ENCODE measurements at regions of chr5 and their contacts with region 1.

Region 1: GRCh38 chr5:54243473-54244080 is 66.8 kb downstream of the ARL15 start:
- H3K4me3 ChIP-seq: no peak overlapping the region
- H3K27ac ChIP-seq: no peak overlapping the region
- H3K4me1 ChIP-seq: no peaks in the 10 kb centered on the region
- CTCF ChIP-seq: peak; percentile 17; the same call in 1 of the 2 replicates

Region 2: GRCh38 chr5:53944981-53945380 is 298.6 kb before region 1 on chr5:
- CTCF ChIA-PET with region 1: no interaction called
- POLR2A ChIA-PET with region 1: no interaction called
- H3K4me3 ChIP-seq: no peak overlapping the region
- H3K27ac ChIP-seq: no peak overlapping the region
- H3K4me1 ChIP-seq: peaks cover 7% of the 10 kb centered on the region
- CTCF ChIP-seq: no peak

Region 3: GRCh38 chr5:54229041-54229780 is 14.4 kb before region 1 on chr5:
- CTCF ChIA-PET with region 1: interaction called, 12 read pairs
- POLR2A ChIA-PET with region 1: no interaction called
- H3K4me3 ChIP-seq: no peak overlapping the region
- H3K27ac ChIP-seq: no peak overlapping the region
- H3K4me1 ChIP-seq: no peaks in the 10 kb centered on the region; the same call in 1 of the 2 replicates
- CTCF ChIP-seq: no peak; the same call in 1 of the 2 replicates

Region 4: GRCh38 chr5:54254482-54255198 is 11.1 kb after region 1 on chr5:
- CTCF ChIA-PET with region 1: interaction called, 21 read pairs
- POLR2A ChIA-PET with region 1: no interaction called
- H3K4me3 ChIP-seq: no peak overlapping the region
- H3K27ac ChIP-seq: no peak overlapping the region
- H3K4me1 ChIP-seq: peaks cover 6% of the 10 kb centered on the region
- CTCF ChIP-seq: no peak

Region 5: DNA sequence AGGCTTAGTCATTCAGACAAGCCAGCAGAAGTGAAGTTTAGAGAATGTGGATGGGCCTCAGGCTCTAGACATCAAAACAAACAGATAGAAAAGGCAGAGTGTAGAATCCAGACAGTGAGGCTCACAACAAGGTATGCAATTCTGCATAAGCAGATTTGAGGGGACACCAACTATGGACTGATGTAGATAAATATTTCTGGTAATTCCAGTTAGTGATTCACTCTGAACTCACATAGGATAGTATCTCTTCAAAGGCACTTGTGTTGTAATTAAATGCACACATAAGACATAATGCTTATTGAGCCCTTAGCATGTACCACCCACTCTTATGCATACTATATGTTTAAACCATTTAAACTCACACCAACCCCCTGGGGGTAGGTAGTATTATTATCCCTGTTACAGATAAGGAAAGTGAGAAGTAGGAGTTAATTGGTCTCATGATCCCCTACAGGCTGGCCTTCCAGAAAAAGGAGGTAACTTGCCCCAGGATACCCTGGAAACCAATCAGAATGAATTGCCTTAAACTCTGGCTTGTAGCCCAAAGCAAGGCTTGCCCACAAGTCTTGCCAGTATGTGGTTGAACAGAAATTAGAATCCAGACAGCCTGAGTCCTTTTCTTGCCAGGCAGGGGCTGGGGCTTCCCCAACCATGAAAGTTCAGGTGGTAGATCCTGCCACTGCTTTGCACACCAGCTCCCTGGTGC is 172.5 kb after region 1 on chr5:
- CTCF ChIA-PET with region 1: interaction called, 30 read pairs
- POLR2A ChIA-PET with region 1: no interaction called
- H3K4me3 ChIP-seq: no peak overlapping the region
- H3K27ac ChIP-seq: no peak overlapping the region
- H3K4me1 ChIP-seq: no peaks in the 10 kb centered on the region
- CTCF ChIP-seq: no peak

Region 6: DNA sequence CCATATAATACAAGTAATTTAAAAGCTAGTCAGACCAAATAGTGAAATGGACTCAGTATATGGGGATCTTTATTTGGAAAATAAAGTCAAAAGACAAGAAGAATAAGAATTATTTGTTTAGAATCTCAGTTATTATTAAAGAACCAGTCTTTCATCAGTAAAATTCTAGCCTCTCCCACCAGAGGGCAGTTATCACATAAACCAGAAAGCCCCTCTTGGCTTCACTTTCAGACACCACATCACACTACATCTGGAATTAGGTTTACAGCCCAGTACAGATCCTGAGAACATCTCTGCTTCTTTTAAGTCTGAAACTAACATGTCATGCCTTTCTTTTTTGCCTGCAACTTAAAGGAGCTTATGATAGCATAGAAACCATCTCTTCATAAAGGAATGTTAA is 199.7 kb after region 1 on chr5:
- CTCF ChIA-PET with region 1: interaction called, 11 read pairs
- POLR2A ChIA-PET with region 1: no interaction called
- H3K4me3 ChIP-seq: no peak overlapping the region
- H3K27ac ChIP-seq: no peak overlapping the region
- H3K4me1 ChIP-seq: no peaks in the 10 kb centered on the region
- CTCF ChIP-seq: 0 out of 2 replicates have a peak, but pooled peaks have one; percentile 20